Mammary epithelial cell (primary cell): ENCODE measurements at regions of chr1 and their contacts with region 1.

Region 1: DNA sequence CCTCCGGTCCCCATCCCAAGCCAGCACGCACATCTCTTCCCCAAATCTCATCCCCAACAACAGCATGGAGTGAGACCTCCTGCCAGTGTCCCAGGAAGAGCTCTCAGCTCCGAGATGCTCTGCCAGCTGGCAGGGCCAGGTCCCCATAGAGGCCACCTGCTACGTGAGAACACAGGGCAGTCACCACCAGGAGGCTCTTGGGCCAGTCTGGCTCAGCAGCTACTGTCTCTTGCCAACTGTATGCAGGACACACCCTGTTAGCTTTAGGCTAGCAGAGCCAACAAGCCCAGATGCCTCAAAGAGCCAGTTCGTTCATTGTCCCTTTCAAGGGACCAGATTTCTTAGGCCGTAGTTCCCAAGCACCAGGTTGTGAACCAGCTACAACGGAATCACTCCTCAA is 36.9 kb downstream of the FBXO2 start:
- DNase-seq: no peak
- H3K4me3 ChIP-seq: no peak overlapping the region
- H3K27ac ChIP-seq: no peak overlapping the region
- H3K4me1 ChIP-seq: no peaks in the 10 kb centered on the region
- H3K27me3 ChIP-seq: no peaks in the 10 kb centered on the region
- CTCF ChIP-seq: peak in 1 of 2 donors; percentile 11

Region 2: DNA sequence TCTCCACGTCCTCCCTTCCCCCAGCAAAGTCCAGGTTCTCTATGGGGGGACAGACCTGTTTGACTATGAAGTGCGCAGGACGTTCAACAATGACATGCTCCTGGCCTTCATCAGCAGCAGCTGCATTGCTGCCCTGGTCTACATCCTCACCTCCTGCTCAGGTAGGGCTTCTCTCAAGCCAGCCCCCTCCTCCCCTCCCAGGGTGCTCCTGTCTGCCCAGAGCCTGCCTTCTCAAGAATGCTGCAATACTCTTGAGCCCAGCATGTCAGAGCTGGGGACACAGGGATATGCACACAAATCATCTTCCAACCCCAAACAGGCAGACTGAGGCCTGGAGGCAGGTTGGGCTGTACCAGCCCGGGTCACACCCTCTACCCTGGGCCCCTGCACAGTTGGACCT is 102.9 kb before region 1 on chr1:
- CTCF ChIA-PET with region 1: no interaction called
- dilution Hi-C with region 1: loop called (anchors 5 kb)
- in situ Hi-C with region 1: no loop called
- intact Hi-C with region 1: no loop called
- DNase-seq: no peak
- H3K4me3 ChIP-seq: no peak overlapping the region
- H3K27ac ChIP-seq: no peak overlapping the region
- H3K4me1 ChIP-seq: no peaks in the 10 kb centered on the region
- H3K27me3 ChIP-seq: no peaks in the 10 kb centered on the region
- CTCF ChIP-seq: no peak

Region 3: DNA sequence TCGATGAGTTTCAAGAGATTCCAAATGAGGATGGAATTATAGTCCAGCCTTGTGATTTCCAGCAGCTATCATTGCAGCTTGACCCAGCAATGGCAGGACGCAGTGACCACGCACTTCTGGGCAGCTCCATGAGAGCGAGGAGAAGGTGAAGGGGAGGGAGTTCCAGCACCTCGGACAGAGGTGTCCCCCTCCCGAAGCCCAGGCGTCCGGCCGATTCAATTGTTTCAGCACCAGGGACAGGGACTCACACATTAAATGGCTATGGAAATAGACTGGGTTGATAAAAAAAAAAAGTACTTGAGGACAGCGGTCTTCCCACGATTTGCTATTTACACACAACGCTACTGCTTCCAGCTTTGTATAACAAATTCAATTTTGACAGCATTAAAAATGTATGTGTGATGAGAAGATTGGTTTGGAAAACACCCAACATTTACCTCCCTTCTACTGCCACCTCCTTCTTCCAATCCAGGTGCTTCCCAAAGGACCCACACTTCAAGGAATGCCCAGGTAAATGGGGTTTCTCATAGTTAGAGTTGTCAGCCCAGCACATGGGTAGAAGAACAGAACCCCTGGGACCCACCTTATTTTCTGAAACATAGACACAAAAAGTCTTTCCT is 66.5 kb before region 1 on chr1:
- CTCF ChIA-PET with region 1: no interaction called
- dilution Hi-C with region 1: no loop called
- in situ Hi-C with region 1: no loop called
- intact Hi-C with region 1: loop called (anchors 10 kb)
- DNase-seq: peak; percentile 70
- H3K4me3 ChIP-seq: no peak overlapping the region
- H3K27ac ChIP-seq: no peak overlapping the region
- H3K4me1 ChIP-seq: no peaks in the 10 kb centered on the region
- H3K27me3 ChIP-seq: no peaks in the 10 kb centered on the region
- CTCF ChIP-seq: no peak